ENCODE measurements at regions of chr7 and their contacts with region 1.

Region 1: DNA sequence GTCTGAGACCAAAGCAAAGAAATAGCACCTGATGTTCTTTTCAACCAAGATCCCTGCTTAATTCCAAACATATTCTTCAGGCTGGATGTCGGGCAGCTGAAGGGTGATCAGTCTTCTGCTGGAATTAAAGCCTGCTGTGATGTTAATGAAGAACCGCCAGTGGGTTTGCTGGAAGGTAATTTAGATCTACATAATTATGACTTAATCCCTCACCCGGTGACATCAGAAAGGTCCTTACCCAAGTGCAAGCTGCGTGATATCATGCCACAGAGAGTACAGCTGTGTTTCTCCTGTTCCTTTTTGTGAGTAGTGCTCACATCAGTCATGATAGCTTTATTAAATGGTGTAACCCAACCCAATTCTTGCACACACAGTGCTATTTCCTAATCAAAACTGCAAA is 29.1 kb upstream of the LRGUK start:
- DNase-seq: no peak
- ATAC-seq: no peak
- H3K4me3 ChIP-seq: no peak overlapping the region
- H3K27ac ChIP-seq: no peak overlapping the region
- H3K4me1 ChIP-seq: no peaks in the 10 kb centered on the region
- H3K27me3 ChIP-seq: no peaks in the 10 kb centered on the region
- CTCF ChIP-seq: no peak
- POLR2A ChIP-seq: no peak

Region 2: DNA sequence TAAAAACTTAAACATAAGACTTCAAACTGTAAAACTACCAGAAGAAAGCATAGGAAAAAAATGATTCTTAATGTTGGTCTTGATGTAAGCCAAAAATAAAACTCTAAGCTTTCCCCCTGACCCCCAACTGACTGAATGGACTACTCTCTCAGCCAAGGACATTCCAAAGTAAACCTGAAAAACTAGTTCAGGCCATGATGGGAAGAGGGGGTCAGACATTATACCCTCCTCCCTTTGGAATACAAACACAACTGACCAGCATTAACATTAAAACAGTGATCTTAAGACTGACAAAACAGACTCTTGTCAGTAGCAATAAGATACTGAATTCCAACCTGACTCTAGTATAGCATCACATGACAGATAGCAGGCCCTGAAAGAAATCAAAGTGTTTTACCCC is 15.6 kb after region 1 on chr7:
- in situ Hi-C with region 1: no loop called
- intact Hi-C with region 1: loop called (anchors 2 kb)
- DNase-seq: no peak
- ATAC-seq: no peak
- H3K4me3 ChIP-seq: no peak overlapping the region
- H3K27ac ChIP-seq: no peak overlapping the region
- H3K4me1 ChIP-seq: no peaks in the 10 kb centered on the region
- H3K27me3 ChIP-seq: no peaks in the 10 kb centered on the region
- CTCF ChIP-seq: no peak
- POLR2A ChIP-seq: no peak

Measured in gastrocnemius medialis (tissue), 4 donors.